Transverse colon (tissue), 4 donors: ENCODE measurements at regions of chr12 and their contacts with region 1.

Region 1: GRCh38 chr12:123388177-123388947 is 4.4 kb downstream of the KMT5A start:
- DNase-seq: peak; percentile 82
- H3K4me3 ChIP-seq: peak overlapping the region; percentile 47 to 63 (median 62)
- H3K27ac ChIP-seq: peak overlapping the region; percentile 87 to 98 (median 90)
- H3K4me1 ChIP-seq: peaks cover 16 to 47% (median 35%) of the 10 kb centered on the region in 4 donors
- H3K27me3 ChIP-seq: no peaks in the 10 kb centered on the region
- CTCF ChIP-seq: peak in 1 of 5 experiments; percentile 10
- EP300 ChIP-seq: no peak
- POLR2A ChIP-seq: no peak

Region 2: GRCh38 chr12:123354600-123354999 is 33.8 kb before region 1 on chr12:
- in situ Hi-C with region 1: no loop called
- intact Hi-C with region 1: loop called (anchors 1 kb)
- DNase-seq: no peak
- H3K4me3 ChIP-seq: no peak overlapping the region
- H3K27ac ChIP-seq: no peak overlapping the region
- H3K4me1 ChIP-seq: peaks cover 0 to 14% (median 5%) of the 10 kb centered on the region in 4 donors
- H3K27me3 ChIP-seq: no peaks in the 10 kb centered on the region
- CTCF ChIP-seq: no peak
- EP300 ChIP-seq: no peak
- POLR2A ChIP-seq: no peak

Region 3: DNA sequence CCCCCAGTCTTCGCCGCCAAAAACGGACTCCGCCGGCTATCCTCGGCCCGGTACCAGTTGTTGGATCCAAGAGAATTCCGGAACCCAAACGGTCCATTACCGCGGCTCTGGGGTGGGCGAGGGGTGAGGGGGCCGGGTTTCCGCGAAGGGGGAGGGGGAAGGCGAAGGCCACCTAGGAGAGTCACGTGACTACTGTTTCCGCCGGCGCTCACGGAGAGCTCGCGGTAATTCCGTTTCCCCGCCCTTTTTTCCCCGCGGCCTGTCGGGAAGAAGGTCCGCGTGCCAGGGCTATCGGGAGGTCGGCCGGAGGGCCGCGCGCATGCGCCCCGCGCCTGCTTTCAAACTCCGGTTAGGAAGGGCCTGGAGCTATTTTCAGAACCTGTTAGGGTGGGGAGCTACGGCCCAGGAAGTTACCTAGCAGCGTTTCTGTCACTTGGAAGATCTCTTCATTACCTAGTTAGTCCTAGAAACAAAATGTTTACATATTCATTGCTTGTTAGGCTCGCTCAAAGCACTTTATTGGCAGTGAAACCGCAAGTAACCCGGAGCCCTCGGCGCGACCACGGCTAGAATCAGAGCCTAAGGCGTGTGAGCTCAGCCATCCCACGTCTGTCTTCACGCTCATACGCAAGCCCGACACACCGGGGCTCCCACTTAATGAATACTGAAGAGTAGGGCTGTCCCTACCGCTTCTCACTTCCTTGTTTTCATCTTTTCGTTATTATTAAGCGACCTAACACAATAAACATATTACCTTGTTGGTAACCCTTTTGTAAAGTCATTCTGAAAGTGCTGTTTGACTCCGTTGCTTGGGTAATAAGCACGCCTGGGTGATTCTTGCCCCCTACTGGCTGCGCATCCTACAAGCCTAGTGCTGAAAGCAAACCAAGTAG is 23.1 kb before region 1 on chr12:
- in situ Hi-C with region 1: no loop called
- intact Hi-C with region 1: loop called (anchors 2 kb)
- DNase-seq: peak; percentile 99
- H3K4me3 ChIP-seq: peak overlapping the region; percentile 81 to 87 (median 83)
- H3K27ac ChIP-seq: peak overlapping the region; percentile 93 to 98 (median 96)
- H3K4me1 ChIP-seq: peaks cover 4 to 33% (median 14%) of the 10 kb centered on the region in 4 donors
- H3K27me3 ChIP-seq: no peaks in the 10 kb centered on the region
- CTCF ChIP-seq: peak; percentile 65 to 92 (median 76)
- EP300 ChIP-seq: no peak
- POLR2A ChIP-seq: peak; percentile 68